HepG2 (cell line): ENCODE measurements at regions of chr6 and their contacts with region 1.

Region 1: GRCh38 chr6:123380257-123380656 is 256.5 kb downstream of the TRDN start:
- DNase-seq: peak; percentile 22
- ATAC-seq: peak; percentile 92
- H3K4me3 ChIP-seq: no peak overlapping the region
- H3K27ac ChIP-seq: no peak overlapping the region
- H3K4me1 ChIP-seq: no peaks in the 10 kb centered on the region
- H3K27me3 ChIP-seq: no peaks in the 10 kb centered on the region
- CTCF ChIP-seq: peak; percentile 46
- EP300 ChIP-seq: no peak
- POLR2A ChIP-seq: no peak
- RAD21 ChIP-seq: no peak

Region 2: DNA sequence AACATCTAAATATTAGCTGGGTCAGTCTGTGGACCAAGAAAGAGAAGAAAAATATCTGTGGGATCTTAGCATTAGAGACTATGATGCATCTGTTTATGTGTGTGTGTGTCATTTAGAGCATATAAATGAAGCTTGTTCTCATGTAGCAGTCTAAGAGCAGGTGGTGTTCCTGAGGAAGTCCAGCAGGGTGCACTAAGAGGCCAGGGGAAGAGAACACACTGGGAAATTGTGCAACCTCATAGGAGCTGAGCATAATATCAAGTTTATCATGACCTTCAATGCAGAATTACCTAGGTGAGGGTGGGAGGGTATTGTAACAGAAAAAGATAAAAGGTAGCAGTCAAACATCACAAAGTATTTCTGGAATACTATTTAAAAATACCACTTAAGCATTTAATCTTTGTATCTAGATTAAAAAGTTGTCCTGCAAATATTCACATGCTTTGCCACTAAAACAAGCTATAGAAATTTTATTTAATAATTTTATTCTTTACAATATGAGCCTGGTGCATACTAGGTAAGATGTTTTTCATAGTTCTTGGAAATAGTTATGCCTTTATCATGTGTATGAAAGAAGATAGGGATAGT is 510.7 kb before region 1 on chr6:
- CTCF ChIA-PET with region 1: no interaction called
- POLR2A ChIA-PET with region 1: no interaction called
- in situ Hi-C with region 1: no loop called
- intact Hi-C with region 1: loop called (anchors 1 kb)
- DNase-seq: peak; percentile 53
- ATAC-seq: peak; percentile 99
- H3K4me3 ChIP-seq: no peak overlapping the region
- H3K27ac ChIP-seq: no peak overlapping the region
- H3K4me1 ChIP-seq: no peaks in the 10 kb centered on the region
- H3K27me3 ChIP-seq: no peaks in the 10 kb centered on the region
- CTCF ChIP-seq: peak; percentile 84
- EP300 ChIP-seq: no peak
- POLR2A ChIP-seq: no peak
- RAD21 ChIP-seq: peak; percentile 84

Region 3: GRCh38 chr6:123363912-123364311 is 16.3 kb before region 1 on chr6:
- CTCF ChIA-PET with region 1: no interaction called
- POLR2A ChIA-PET with region 1: no interaction called
- in situ Hi-C with region 1: no loop called
- intact Hi-C with region 1: no loop called
- DNase-seq: no peak
- ATAC-seq: no peak
- H3K4me3 ChIP-seq: no peak overlapping the region
- H3K27ac ChIP-seq: no peak overlapping the region
- H3K4me1 ChIP-seq: no peaks in the 10 kb centered on the region
- H3K27me3 ChIP-seq: no peaks in the 10 kb centered on the region
- CTCF ChIP-seq: no peak
- EP300 ChIP-seq: no peak
- POLR2A ChIP-seq: no peak
- RAD21 ChIP-seq: no peak

Region 4: DNA sequence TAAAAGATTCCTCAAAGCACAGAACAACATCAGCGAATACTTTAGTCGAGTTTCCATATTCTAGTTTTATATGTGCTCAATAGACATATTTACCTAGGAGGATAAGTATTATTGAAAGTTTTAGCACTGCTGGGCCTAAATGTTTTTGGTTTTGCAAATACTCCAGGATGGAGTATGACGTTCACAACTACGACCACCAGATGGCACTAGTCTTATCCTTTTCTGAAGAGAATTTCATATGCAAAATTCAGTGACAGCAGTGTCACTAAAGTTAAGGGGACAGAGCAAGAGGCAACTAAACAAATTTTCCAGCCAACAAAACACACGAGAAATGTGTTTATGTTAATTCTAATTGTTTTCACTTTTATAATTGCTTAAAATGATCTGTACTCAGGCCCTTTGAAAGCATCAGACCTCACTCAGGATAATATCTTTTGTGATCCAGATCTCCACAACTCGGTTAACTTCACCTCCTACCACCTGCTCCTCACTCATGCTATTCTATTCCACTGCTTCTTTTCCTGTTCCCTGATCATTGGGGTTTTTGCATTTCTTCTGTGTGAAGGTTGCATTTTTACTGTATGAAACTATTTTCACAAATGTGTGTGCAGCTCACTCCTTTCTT is 35.7 kb after region 1 on chr6:
- CTCF ChIA-PET with region 1: no interaction called
- POLR2A ChIA-PET with region 1: no interaction called
- in situ Hi-C with region 1: no loop called
- intact Hi-C with region 1: no loop called
- DNase-seq: peak; percentile 56
- ATAC-seq: peak; percentile 82
- H3K4me3 ChIP-seq: no peak overlapping the region
- H3K27ac ChIP-seq: no peak overlapping the region
- H3K4me1 ChIP-seq: no peaks in the 10 kb centered on the region
- H3K27me3 ChIP-seq: no peaks in the 10 kb centered on the region
- CTCF ChIP-seq: peak; percentile 73
- EP300 ChIP-seq: no peak
- POLR2A ChIP-seq: no peak
- RAD21 ChIP-seq: peak; percentile 50; the same call in 1 of the 2 replicates